T-cell (primary cell): ENCODE measurements at regions of chr5 and their contacts with region 1.

Region 1: GRCh38 chr5:56838409-56839039 is 23.2 kb downstream of the MAP3K1 start:
- DNase-seq: peak in 2 of 35 experiments; percentile 11 to 76
- ATAC-seq: peak; percentile 53 to 72 (median 59)
- H3K4me3 ChIP-seq: no peak overlapping the region
- H3K4me3 Mint-ChIP-seq: peak overlapping the region; percentile 7 to 57 (median 53)
- H3K27ac ChIP-seq: peak overlapping the region; percentile 42
- H3K27ac Mint-ChIP-seq: peak overlapping the region; percentile 79 to 85
- H3K4me1 ChIP-seq: peaks cover 48 to 49% of the 10 kb centered on the region in 2 experiments
- H3K4me1 Mint-ChIP-seq: peaks cover 92 to 95% (median 94%) of the 10 kb centered on the region in 3 donors
- H3K27me3 ChIP-seq: no peaks in the 10 kb centered on the region
- H3K27me3 Mint-ChIP-seq: no peaks in the 10 kb centered on the region

Region 2: DNA sequence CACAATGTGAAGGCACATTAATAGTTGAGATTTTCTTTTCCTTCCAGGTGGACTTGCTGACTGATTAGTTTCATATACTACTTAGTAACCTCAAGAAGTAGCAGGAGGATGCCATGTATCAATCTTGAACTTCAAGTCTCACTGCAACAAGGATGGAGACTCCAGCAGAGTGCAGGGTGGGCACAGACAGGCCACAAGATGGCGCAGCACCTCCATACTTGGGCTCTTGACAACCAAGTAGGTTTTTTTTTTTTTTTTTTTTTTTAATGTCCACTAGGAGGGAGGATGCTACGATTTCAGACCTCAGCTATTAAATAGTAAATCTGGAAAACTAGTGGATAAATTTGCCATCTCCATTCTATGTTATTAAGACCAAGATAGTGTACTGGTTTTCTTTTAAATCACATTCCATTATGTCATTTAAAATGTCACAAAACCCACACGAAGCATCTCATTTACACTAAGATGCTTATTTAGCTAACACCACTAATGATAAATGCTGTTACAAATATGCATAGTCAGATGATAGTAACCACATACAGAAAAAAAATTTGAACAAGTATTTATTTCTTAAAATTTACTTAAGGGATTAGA is 902.3 kb before region 1 on chr5:
- CTCF ChIA-PET with region 1: interaction called, 6 to 22 read pairs
- POLR2A ChIA-PET with region 1: interaction called in 1 of 2 experiments, 3 read pairs
- DNase-seq: peak; percentile 49 to 88 (median 72)
- ATAC-seq: peak; percentile 70 to 74 (median 73)
- H3K4me3 ChIP-seq: no peak overlapping the region
- H3K4me3 Mint-ChIP-seq: no peak overlapping the region
- H3K27ac ChIP-seq: no peak overlapping the region
- H3K27ac Mint-ChIP-seq: peak overlapping the region in 1 of 2 donors; percentile 34
- H3K4me1 ChIP-seq: no peaks in the 10 kb centered on the region
- H3K4me1 Mint-ChIP-seq: peaks cover 0 to 15% (median 15%) of the 10 kb centered on the region in 3 donors
- H3K27me3 ChIP-seq: no peaks in the 10 kb centered on the region
- H3K27me3 Mint-ChIP-seq: no peaks in the 10 kb centered on the region

Region 3: DNA sequence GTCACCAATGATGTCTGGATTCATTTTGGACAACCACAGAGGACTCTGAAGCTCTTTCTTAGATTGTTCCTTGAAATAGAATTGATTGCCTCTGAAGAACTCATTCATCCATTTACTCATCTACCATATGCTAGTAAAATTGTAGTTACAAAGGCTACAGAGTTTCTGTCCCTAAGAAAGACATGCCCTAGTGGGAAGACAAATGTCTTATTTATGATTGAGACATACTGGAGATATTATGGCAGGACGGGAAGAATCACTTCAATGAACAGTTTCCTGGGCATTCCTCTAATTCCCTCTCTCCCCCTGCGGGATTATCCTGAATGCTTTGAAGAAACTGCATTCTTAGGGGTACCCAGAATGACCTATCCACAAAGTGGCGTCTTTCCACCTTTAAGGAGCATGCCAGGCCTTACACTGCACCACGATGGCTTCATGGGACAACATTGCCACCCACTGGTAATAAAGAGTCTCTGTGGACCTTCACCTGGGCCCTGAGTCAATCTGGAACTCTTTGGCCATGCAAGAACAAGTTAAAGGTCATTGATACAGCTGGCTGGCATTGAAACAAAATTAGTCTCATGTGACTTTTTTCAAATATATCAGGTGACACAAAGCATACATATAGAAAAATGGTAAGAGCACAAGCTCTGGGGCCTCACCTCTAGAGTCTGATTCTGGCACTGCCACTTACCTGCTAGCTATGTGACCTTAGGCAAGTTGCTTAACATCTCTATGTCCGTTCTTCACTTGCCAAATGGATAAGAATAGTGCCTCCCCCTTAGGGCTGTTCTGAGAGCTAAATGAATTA is 637.5 kb before region 1 on chr5:
- CTCF ChIA-PET with region 1: interaction called, 4 to 12 read pairs
- POLR2A ChIA-PET with region 1: no interaction called
- DNase-seq: peak; percentile 17 to 83 (median 43)
- ATAC-seq: peak; percentile 82 to 99 (median 96)
- H3K4me3 ChIP-seq: no peak overlapping the region
- H3K4me3 Mint-ChIP-seq: no peak overlapping the region
- H3K27ac ChIP-seq: no peak overlapping the region
- H3K27ac Mint-ChIP-seq: peak overlapping the region in 1 of 2 donors; percentile 79
- H3K4me1 ChIP-seq: peaks cover 7% of the 10 kb centered on the region in 2 experiments
- H3K4me1 Mint-ChIP-seq: peaks cover 16 to 31% (median 27%) of the 10 kb centered on the region in 3 donors
- H3K27me3 ChIP-seq: no peaks in the 10 kb centered on the region
- H3K27me3 Mint-ChIP-seq: no peaks in the 10 kb centered on the region

Region 4: GRCh38 chr5:56270568-56271392 is 567.7 kb before region 1 on chr5:
- CTCF ChIA-PET with region 1: interaction called, 41 to 105 read pairs
- POLR2A ChIA-PET with region 1: interaction called, 3 read pairs
- DNase-seq: peak; percentile 38 to 84 (median 62)
- ATAC-seq: peak; percentile 89 to 97 (median 94)
- H3K4me3 ChIP-seq: no peak overlapping the region
- H3K4me3 Mint-ChIP-seq: peak overlapping the region; percentile 54 to 64 (median 61)
- H3K27ac ChIP-seq: no peak overlapping the region
- H3K27ac Mint-ChIP-seq: peak overlapping the region; percentile 73 to 83
- H3K4me1 ChIP-seq: peaks cover 4 to 7% of the 10 kb centered on the region in 2 experiments
- H3K4me1 Mint-ChIP-seq: peaks cover 18 to 21% (median 18%) of the 10 kb centered on the region in 3 donors
- H3K27me3 ChIP-seq: peaks cover 0 to 3% of the 10 kb centered on the region in 2 experiments
- H3K27me3 Mint-ChIP-seq: no peaks in the 10 kb centered on the region

Region 5: GRCh38 chr5:56818450-56819037 is 20.0 kb before region 1 on chr5:
- CTCF ChIA-PET with region 1: interaction called, 3 to 25 read pairs
- POLR2A ChIA-PET with region 1: no interaction called
- DNase-seq: no peak
- ATAC-seq: no peak
- H3K4me3 ChIP-seq: peak overlapping the region in 1 of 2 donors; percentile 40
- H3K4me3 Mint-ChIP-seq: peak overlapping the region; percentile 75 to 92 (median 78)
- H3K27ac ChIP-seq: peak overlapping the region; percentile 41
- H3K27ac Mint-ChIP-seq: peak overlapping the region; percentile 80 to 85
- H3K4me1 ChIP-seq: peaks cover 28 to 37% of the 10 kb centered on the region in 2 experiments
- H3K4me1 Mint-ChIP-seq: peaks cover 62 to 68% (median 62%) of the 10 kb centered on the region in 3 donors
- H3K27me3 ChIP-seq: no peaks in the 10 kb centered on the region
- H3K27me3 Mint-ChIP-seq: no peaks in the 10 kb centered on the region

Region 6: DNA sequence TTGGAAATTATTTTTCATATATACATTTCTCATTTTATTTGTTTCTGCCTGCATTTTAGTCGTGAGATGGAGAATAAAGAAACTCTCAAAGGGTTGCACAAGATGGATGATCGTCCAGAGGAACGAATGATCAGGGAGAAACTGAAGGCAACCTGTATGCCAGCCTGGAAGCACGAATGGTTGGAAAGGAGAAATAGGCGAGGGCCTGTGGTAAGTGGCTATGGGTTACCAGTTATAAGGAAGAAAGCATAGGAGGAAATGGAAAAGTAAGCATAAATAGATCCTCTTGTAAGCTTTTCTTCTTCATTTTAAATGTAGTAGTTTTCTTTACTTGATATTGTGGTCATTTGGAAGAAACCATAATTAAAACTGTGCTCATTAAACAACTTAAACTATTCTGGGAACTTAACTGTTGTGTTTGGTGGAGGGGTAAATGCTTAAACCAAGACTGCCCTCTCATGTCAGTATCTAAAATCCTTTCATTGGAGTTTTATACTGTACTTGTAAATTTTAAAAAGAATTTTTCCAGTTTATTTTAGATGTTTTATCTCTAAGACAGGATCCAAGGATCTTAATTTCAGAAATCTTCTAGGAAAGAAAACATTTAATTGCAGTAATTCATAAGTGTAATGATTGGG is 18.1 kb after region 1 on chr5:
- CTCF ChIA-PET with region 1: interaction called, 3 to 11 read pairs
- POLR2A ChIA-PET with region 1: interaction called in 1 of 2 experiments, 4 read pairs
- DNase-seq: no peak
- ATAC-seq: no peak
- H3K4me3 ChIP-seq: no peak overlapping the region
- H3K4me3 Mint-ChIP-seq: no peak overlapping the region
- H3K27ac ChIP-seq: no peak overlapping the region
- H3K27ac Mint-ChIP-seq: peak overlapping the region; percentile 44 to 70
- H3K4me1 ChIP-seq: peaks cover 17 to 34% of the 10 kb centered on the region in 2 experiments
- H3K4me1 Mint-ChIP-seq: peaks cover 60 to 71% (median 62%) of the 10 kb centered on the region in 3 donors
- H3K27me3 ChIP-seq: no peaks in the 10 kb centered on the region
- H3K27me3 Mint-ChIP-seq: no peaks in the 10 kb centered on the region

Region 7: GRCh38 chr5:56918054-56918453 is 79.5 kb after region 1 on chr5:
- CTCF ChIA-PET with region 1: no interaction called
- POLR2A ChIA-PET with region 1: no interaction called
- DNase-seq: no peak
- ATAC-seq: no peak
- H3K4me3 ChIP-seq: no peak overlapping the region
- H3K4me3 Mint-ChIP-seq: no peak overlapping the region
- H3K27ac ChIP-seq: no peak overlapping the region
- H3K27ac Mint-ChIP-seq: no peak overlapping the region
- H3K4me1 ChIP-seq: no peaks in the 10 kb centered on the region
- H3K4me1 Mint-ChIP-seq: peaks cover 2 to 17% (median 3%) of the 10 kb centered on the region in 3 donors
- H3K27me3 ChIP-seq: no peaks in the 10 kb centered on the region
- H3K27me3 Mint-ChIP-seq: no peaks in the 10 kb centered on the region

Region 8: GRCh38 chr5:57094753-57095683 is 256.5 kb after region 1 on chr5:
- CTCF ChIA-PET with region 1: no interaction called
- POLR2A ChIA-PET with region 1: no interaction called
- DNase-seq: peak in 1 of 35 experiments; percentile 12
- ATAC-seq: no peak
- H3K4me3 ChIP-seq: no peak overlapping the region
- H3K4me3 Mint-ChIP-seq: no peak overlapping the region
- H3K27ac ChIP-seq: no peak overlapping the region
- H3K27ac Mint-ChIP-seq: no peak overlapping the region
- H3K4me1 ChIP-seq: no peaks in the 10 kb centered on the region
- H3K4me1 Mint-ChIP-seq: no peaks in the 10 kb centered on the region
- H3K27me3 ChIP-seq: peaks cover 0 to 6% of the 10 kb centered on the region in 2 experiments
- H3K27me3 Mint-ChIP-seq: no peaks in the 10 kb centered on the region